Activated CD4-positive, alpha-beta memory T cell treated with anti-CD3 and anti-CD28 coated beads, Interleukin-2, amount 10 ng/mL, durations not matched to agents 7 days and 5 days (primary cell): ENCODE measurements at regions of chr12 and their contacts with region 1.

Region 1: DNA sequence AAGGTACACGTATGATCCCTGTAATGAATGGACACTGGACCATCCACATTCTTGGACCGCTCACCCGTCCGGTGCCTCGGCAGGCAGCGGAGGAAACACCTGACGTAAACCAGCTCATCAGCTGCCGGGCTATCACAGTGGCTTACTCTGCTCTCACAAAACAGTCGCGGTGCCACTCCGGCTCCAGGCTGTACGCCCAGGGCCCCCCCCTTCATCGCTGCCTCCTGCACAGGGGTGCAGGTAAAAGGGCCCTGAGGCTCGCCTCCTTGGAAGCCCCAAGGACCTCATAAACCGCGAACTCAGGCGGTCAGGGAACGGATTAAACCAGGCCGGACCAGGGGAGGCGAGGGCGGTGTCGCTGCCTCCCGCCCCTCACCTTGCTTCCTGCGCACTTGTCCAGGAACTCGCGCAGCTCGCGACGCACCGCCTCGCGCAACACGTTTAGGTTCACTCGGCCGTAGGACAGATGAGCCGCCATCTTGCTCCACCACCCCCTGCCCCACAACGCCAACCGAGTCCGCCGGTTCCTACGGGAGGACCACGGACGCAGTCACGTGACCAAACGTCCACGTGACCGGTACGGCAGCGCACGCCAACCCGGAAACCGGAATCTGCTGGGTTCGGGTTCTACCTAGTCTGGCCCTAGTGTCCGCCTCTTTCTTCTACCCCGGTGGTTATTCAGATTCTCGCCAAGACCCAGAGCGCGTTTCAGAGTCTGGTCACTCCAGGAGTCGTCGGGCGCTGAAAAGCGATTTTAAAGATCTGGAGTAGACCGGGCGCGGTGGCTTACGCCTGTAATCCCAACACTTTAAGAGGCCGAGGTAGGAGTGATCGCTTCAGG is at the start of gene VPS33A:
- DNase-seq: peak; percentile 96
- H3K4me3 Mint-ChIP-seq: peak within 1 kb of the TSS; percentile 94
- H3K27ac Mint-ChIP-seq: peak within 1 kb of the TSS; percentile 97
- H3K4me1 Mint-ChIP-seq: peaks cover 26% of the 10 kb centered on the region
- H3K27me3 Mint-ChIP-seq: peaks cover 3% of the 10 kb centered on the region
- total RNA-seq, gene VPS33A: 29.8 to 30.6 TPM

Region 2: DNA sequence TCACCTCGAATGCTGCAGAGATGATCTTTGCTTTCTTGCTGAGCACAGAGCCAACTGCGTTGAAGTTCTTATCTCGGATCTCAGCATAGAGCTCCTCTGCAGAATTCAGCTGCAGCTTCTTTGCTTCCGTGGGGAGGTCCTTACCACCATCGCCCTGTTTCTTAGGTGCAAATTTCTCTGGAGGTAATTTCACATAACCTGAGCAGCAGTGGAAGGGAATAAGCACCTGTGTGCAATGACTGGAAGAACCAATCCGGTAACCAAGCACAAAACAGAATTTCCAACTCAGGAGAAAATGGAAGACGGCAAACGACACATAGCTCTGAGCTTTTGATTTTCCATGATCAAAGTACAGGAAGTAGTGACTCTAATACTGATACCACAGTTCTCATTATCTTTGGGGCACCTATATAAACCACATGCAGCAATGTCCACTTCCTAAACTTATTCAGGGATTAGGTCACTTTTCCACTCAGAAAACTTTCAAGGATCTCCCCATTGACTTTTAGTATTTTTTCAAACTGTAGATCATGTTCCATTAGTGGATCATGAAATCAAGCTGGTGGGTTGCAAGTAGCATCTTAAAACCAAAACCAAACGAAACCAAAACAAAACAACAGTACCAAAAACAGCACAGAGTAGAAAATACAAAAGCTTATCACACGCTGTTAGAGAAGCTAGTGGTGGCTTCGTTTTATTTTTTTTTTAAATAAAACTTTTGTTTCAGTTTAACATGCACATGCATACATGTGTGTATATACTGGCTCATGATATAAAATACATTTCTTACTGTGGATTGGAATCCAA is 21.4 kb before region 1 on chr12:
- CTCF ChIA-PET with region 1: interaction called, 14 read pairs
- POLR2A ChIA-PET with region 1: interaction called, 50 read pairs
- DNase-seq: peak; percentile 49
- H3K4me3 Mint-ChIP-seq: peak overlapping the region; percentile 70
- H3K27ac Mint-ChIP-seq: peak overlapping the region; percentile 96
- H3K4me1 Mint-ChIP-seq: peaks cover 31% of the 10 kb centered on the region
- H3K27me3 Mint-ChIP-seq: no peaks in the 10 kb centered on the region